ENCODE measurements at regions of chr7 and their contacts with region 1.

Region 1: GRCh38 chr7:156949541-156950380 is at the start of gene NOM1:
- DNase-seq: peak; percentile 95
- ATAC-seq: peak; percentile 92
- H3K4me3 Mint-ChIP-seq: peak within 1 kb of the TSS; percentile 94
- H3K27ac Mint-ChIP-seq: peak within 1 kb of the TSS; percentile 84
- H3K4me1 Mint-ChIP-seq: peaks cover 26% of the 10 kb centered on the region
- H3K27me3 Mint-ChIP-seq: peaks cover 5% of the 10 kb centered on the region
- total RNA-seq, gene NOM1: 27.3 to 32.1 TPM

Region 2: DNA sequence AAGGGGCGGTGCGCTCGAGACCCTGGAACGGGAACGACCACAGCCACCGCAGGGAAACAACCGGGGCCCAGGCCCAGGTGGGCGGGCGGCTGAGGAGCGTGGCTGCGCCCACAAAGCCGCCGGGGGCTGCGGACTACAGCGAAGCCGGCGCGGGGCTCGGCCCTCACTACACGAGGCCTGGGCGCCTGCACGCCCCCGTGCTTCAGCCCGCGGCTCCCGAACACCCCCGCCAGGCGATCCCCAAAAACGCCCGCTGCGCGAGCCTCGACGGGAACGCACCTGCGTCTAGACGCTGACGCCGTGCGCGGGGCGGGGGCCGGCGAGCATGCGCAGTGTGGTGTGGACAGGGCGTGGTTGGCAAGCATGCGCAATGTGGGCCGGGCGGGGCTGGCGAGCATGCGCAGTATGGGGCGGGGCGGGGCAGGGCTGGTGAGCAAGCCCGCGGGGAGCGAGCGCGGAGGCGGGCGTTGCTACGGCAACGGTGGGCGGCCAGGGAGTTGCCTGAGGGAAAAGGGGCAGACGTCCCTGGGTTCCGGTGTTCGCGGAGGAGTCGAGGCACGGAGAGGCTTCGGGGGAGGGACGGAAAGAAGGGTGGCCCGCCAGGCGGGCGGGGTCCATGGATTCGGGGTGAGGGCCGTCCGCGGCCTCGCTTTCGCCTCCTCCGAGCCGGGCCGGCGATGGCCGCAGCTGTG is 309.4 kb before region 1 on chr7 and contains the start of gene RNF32:
- CTCF ChIA-PET with region 1: no interaction called
- POLR2A ChIA-PET with region 1: no interaction called
- intact Hi-C with region 1: loop called in 1 of 2 experiments (anchors 1 kb)
- DNase-seq: peak; percentile 100
- ATAC-seq: peak; percentile 90
- H3K4me3 Mint-ChIP-seq: peak within 1 kb of the TSS; percentile 76
- H3K27ac Mint-ChIP-seq: peak within 1 kb of the TSS; percentile 87
- H3K4me1 Mint-ChIP-seq: peaks cover 15% of the 10 kb centered on the region
- H3K27me3 Mint-ChIP-seq: peaks cover 29% of the 10 kb centered on the region
- total RNA-seq, gene RNF32: 0.71 to 0.90 TPM

Region 3: GRCh38 chr7:156907656-156908055 is 42.1 kb before region 1 on chr7:
- CTCF ChIA-PET with region 1: no interaction called
- POLR2A ChIA-PET with region 1: no interaction called
- intact Hi-C with region 1: loop called (anchors 1 to 5 kb)
- DNase-seq: no peak
- ATAC-seq: no peak
- H3K4me3 Mint-ChIP-seq: no peak overlapping the region
- H3K27ac Mint-ChIP-seq: no peak overlapping the region
- H3K4me1 Mint-ChIP-seq: peaks cover 12% of the 10 kb centered on the region
- H3K27me3 Mint-ChIP-seq: peaks cover 8% of the 10 kb centered on the region

Region 4: DNA sequence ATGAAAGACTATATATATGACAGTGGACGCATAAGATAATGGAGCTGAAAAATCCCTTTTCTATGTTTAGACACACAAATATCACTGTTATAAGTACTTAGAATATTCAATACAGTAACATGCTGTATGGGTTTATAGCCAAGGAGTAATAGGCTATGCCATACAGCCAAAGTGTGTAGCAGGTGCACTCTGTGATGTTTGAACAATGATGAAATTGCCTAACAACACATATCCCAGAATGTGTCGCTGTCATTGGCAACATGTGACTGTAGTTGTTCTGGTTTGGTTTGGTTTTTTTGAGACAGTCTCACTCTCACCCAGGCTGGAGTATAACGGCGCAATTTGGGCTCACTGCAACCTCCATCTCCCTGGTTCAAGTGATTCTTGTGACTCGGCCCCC is 25.9 kb after region 1 on chr7:
- CTCF ChIA-PET with region 1: no interaction called
- POLR2A ChIA-PET with region 1: interaction called, 11 read pairs
- intact Hi-C with region 1: no loop called
- DNase-seq: no peak
- ATAC-seq: no peak
- H3K4me3 Mint-ChIP-seq: no peak overlapping the region
- H3K27ac Mint-ChIP-seq: no peak overlapping the region
- H3K4me1 Mint-ChIP-seq: no peaks in the 10 kb centered on the region
- H3K27me3 Mint-ChIP-seq: no peaks in the 10 kb centered on the region

Region 5: GRCh38 chr7:157138424-157139110 is 188.8 kb after region 1 on chr7 and contains the start of gene UBE3C:
- CTCF ChIA-PET with region 1: interaction called, 6 read pairs
- POLR2A ChIA-PET with region 1: interaction called, 5 read pairs
- intact Hi-C with region 1: loop called (anchors 1 to 5 kb)
- DNase-seq: peak; percentile 94
- ATAC-seq: peak; percentile 87
- H3K4me3 Mint-ChIP-seq: peak within 1 kb of the TSS; percentile 84
- H3K27ac Mint-ChIP-seq: peak within 1 kb of the TSS; percentile 89
- H3K4me1 Mint-ChIP-seq: peaks cover 41% of the 10 kb centered on the region
- H3K27me3 Mint-ChIP-seq: no peaks in the 10 kb centered on the region
- total RNA-seq, gene UBE3C: 53.9 to 60.7 TPM

Region 6: GRCh38 chr7:157336383-157337315 is 386.9 kb after region 1 on chr7 and contains the start of gene DNAJB6:
- CTCF ChIA-PET with region 1: interaction called, 5 read pairs
- POLR2A ChIA-PET with region 1: interaction called, 5 read pairs
- intact Hi-C with region 1: loop called in 1 of 2 experiments (anchors 1 kb)
- DNase-seq: peak; percentile 97
- ATAC-seq: peak; percentile 75
- H3K4me3 Mint-ChIP-seq: peak within 1 kb of the TSS; percentile 90
- H3K27ac Mint-ChIP-seq: peak within 1 kb of the TSS; percentile 96
- H3K4me1 Mint-ChIP-seq: peaks cover 40% of the 10 kb centered on the region
- H3K27me3 Mint-ChIP-seq: no peaks in the 10 kb centered on the region
- total RNA-seq, gene DNAJB6: 89.9 to 92.9 TPM